ENCODE measurements at regions of chr2 and their contacts with region 1.

Region 1: DNA sequence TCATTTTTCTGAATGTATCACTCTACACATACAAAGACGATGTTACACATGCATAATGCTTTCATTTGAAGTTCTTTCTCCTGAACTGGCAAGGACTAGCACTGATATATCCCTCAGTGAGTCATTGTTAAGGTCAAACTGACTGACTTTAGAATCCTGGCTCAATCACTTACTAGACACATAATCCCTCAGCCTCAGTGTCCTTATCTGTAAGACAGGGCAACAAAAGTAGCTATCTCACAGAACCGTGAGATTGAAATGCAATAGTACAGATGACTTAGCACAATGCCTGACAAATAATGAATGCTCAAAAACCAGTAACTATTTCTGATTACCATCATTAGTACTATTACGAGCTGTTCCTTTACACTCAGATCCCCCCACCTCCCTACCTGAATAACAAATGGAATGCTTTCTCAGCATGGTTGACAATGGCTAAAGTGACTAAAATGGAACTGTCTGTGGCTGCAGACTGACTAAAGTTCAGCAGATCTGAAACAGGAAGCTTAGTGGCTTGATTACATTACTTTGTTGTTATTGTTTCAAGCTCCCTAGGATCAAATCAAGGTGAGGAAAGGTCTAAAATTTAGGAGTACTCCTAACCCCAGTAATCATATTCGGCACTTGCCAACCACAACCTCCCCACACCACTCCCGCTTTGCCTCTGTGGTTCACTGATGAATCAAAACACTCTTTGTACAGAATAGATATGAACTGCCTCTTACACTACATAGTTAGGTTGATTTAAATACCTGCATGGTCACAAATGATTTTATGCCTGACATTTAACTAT is 35.8 kb upstream of the CACNB4 start:
- DNase-seq: peak; percentile 5
- H3K4me3 Mint-ChIP-seq: no peak overlapping the region
- H3K27ac Mint-ChIP-seq: no peak overlapping the region
- H3K4me1 Mint-ChIP-seq: peaks cover 15% of the 10 kb centered on the region
- H3K27me3 Mint-ChIP-seq: no peaks in the 10 kb centered on the region

Region 2: GRCh38 chr2:152062125-152063091 is 72.3 kb before region 1 on chr2:
- intact Hi-C with region 1: no loop called
- DNase-seq: no peak
- H3K4me3 Mint-ChIP-seq: no peak overlapping the region
- H3K27ac Mint-ChIP-seq: no peak overlapping the region
- H3K4me1 Mint-ChIP-seq: no peaks in the 10 kb centered on the region
- H3K27me3 Mint-ChIP-seq: peaks cover 9% of the 10 kb centered on the region

Region 3: DNA sequence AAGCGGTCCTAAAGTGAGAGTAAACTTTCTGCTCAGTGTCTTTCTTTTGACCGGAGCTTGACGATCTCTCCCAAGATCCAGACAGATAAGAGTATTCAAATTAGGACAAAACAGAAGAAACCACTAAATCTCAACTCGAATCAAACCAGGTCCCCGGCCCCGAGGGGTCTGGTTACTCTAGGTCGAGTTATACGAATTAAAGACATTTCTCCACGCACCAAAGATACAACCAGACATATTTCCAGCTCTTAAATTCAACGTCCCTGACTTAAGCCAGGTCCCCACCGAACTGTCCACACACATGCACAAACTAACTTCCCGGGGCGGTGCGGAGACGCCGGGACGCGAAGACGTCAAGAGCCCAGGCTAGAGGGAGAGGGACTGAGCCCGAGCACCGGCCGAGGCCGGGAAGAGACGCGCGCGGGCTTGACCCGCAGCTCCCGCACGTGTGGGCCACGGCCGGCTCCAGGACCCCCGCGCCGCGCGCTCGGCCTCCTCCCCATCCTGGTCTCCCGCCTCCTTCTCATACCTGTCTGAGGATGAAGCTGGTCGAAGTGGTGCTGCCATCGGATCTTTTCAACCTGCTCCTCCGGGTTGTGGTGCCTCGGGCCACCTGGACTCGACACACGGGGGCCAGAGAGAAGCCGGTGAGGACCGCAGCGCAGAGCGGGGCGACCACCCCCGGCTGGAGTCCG is 36.7 kb before region 1 on chr2:
- intact Hi-C with region 1: loop called (anchors 2 kb)
- DNase-seq: no peak
- H3K4me3 Mint-ChIP-seq: peak overlapping the region; percentile 61
- H3K27ac Mint-ChIP-seq: no peak overlapping the region
- H3K4me1 Mint-ChIP-seq: peaks cover 18% of the 10 kb centered on the region
- H3K27me3 Mint-ChIP-seq: peaks cover 64% of the 10 kb centered on the region

Region 4: GRCh38 chr2:152166633-152167032 is 31.9 kb after region 1 on chr2:
- intact Hi-C with region 1: loop called (anchors 2 kb)
- DNase-seq: no peak
- H3K4me3 Mint-ChIP-seq: no peak overlapping the region
- H3K27ac Mint-ChIP-seq: no peak overlapping the region
- H3K4me1 Mint-ChIP-seq: peaks cover 22% of the 10 kb centered on the region
- H3K27me3 Mint-ChIP-seq: no peaks in the 10 kb centered on the region

Region 5: DNA sequence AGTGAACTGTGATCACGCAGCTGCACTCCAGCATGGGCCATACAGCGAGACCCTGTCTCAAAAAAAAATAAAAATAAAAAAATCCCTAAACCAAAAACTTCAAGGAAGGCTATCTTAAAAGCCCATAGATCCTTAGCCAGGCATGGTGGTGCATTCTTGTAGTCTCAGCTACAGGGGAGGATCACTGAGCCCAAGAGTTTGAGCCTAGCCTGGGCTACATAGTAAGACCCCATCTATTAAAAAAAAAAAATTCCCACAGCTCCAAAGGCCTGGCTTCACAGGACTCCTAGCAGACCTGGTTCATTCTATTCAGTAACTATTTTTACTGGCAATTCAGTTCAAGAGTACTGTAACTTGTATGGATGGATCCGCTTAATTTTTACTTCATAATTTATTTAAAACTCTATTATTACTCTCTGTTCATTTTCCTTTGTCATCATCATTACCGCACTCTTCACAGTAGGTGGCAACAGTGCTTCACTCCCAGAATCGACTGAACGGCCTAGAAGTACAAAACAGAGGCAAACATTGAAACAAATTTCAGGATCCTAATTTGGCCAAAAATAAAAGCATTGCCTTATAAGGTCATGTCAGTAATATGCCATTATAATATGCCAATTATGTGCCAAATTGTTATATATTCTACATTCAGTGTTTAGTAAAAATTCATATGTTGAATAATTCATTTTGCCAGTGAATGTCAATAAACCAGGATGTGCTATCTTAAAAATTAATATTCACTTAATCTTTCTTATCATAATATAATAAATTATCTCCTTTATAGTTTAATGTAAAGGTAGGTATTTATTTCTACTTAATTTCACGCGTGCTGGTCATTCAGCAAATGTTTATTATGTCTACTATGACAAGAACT is 55.2 kb after region 1 on chr2:
- intact Hi-C with region 1: no loop called
- DNase-seq: no peak
- H3K4me3 Mint-ChIP-seq: no peak overlapping the region
- H3K27ac Mint-ChIP-seq: no peak overlapping the region
- H3K4me1 Mint-ChIP-seq: peaks cover 4% of the 10 kb centered on the region
- H3K27me3 Mint-ChIP-seq: peaks cover 7% of the 10 kb centered on the region

Region 6: DNA sequence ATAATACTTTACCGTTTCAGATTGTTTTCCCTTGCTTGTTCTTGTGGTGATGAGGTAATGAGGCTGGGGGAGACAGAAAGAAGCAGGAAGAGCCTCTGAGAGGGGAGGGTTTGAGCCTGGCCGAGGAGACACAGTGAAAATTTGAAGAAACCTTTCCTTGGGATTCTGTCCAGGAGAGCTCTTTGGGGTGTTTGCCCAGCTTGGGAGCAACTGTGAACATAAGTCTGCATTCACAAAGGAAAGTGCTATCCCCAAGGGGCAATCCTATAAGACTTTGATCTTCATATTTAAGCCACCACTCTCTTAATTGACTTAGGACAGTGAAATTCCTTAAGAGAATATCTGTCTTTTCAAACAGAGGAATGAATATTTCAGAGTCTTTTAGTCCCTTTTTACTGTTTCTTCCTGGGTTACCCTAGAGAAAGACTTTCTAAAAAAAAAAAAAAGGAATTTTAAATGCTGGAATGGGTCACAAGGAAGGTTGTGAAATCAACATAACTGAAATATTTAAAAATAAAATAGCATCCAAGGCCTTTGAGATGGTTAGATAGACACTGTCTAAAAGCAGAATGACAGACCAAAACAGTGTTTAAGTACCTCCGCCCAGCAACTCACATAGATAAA is 93.4 kb after region 1 on chr2:
- intact Hi-C with region 1: no loop called
- DNase-seq: no peak
- H3K4me3 Mint-ChIP-seq: no peak overlapping the region
- H3K27ac Mint-ChIP-seq: no peak overlapping the region
- H3K4me1 Mint-ChIP-seq: no peaks in the 10 kb centered on the region
- H3K27me3 Mint-ChIP-seq: peaks cover 8% of the 10 kb centered on the region